PC-3 (cell line): ENCODE measurements at regions of chr5 and their contacts with region 1.

Region 1: GRCh38 chr5:55936100-55936693 is 58.6 kb downstream of the IL6ST start:
- DNase-seq: peak; percentile 72
- ATAC-seq: peak; percentile 77
- H3K4me3 ChIP-seq: no peak overlapping the region
- H3K27ac ChIP-seq: no peak overlapping the region
- H3K4me1 ChIP-seq: no peaks in the 10 kb centered on the region
- H3K27me3 ChIP-seq: no peaks in the 10 kb centered on the region
- CTCF ChIP-seq: peak; percentile 88

Region 2: DNA sequence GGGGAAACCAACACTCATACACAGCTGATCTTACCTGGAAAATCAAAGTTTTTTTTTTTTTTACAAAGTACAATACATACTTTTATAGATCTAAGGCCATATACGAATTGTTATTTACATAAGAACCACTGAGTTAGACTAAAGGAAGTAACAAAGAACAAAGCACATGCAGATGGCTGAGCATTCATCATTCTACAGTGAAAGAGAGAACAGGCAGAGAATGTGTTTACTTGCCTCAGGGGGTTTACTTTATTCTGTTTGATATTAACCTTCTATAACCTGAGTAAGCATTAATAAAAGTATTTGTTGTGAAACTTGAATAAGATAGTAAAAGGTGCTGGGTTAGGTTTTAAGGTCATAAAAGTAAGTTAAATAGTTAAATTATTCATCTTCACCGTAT is 278.8 kb before region 1 on chr5:
- CTCF ChIA-PET with region 1: interaction called, 13 read pairs
- POLR2A ChIA-PET with region 1: no interaction called
- intact Hi-C with region 1: no loop called
- DNase-seq: peak; percentile 51
- ATAC-seq: peak; percentile 95
- H3K4me3 ChIP-seq: no peak overlapping the region
- H3K27ac ChIP-seq: no peak overlapping the region
- H3K4me1 ChIP-seq: peaks cover 8% of the 10 kb centered on the region; the same call in 1 of the 2 replicates
- H3K27me3 ChIP-seq: no peaks in the 10 kb centered on the region
- CTCF ChIP-seq: no peak

Region 3: GRCh38 chr5:56200856-56201666 is 264.9 kb after region 1 on chr5:
- CTCF ChIA-PET with region 1: interaction called, 4 read pairs
- POLR2A ChIA-PET with region 1: no interaction called
- intact Hi-C with region 1: loop called (anchors 1 kb)
- DNase-seq: peak; percentile 71
- ATAC-seq: peak; percentile 99
- H3K4me3 ChIP-seq: no peak overlapping the region
- H3K27ac ChIP-seq: no peak overlapping the region
- H3K4me1 ChIP-seq: peaks cover 5% of the 10 kb centered on the region; the same call in 1 of the 2 replicates
- H3K27me3 ChIP-seq: no peaks in the 10 kb centered on the region
- CTCF ChIP-seq: peak; percentile 85

Region 4: GRCh38 chr5:56264417-56265025 is 328.3 kb after region 1 on chr5:
- CTCF ChIA-PET with region 1: interaction called, 12 read pairs
- POLR2A ChIA-PET with region 1: no interaction called
- intact Hi-C with region 1: no loop called
- DNase-seq: peak; percentile 66
- ATAC-seq: peak; percentile 75
- H3K4me3 ChIP-seq: 0 out of 2 replicates have a peak overlapping the region, but pooled peaks have one; percentile 29
- H3K27ac ChIP-seq: no peak overlapping the region
- H3K4me1 ChIP-seq: peaks cover under 1% of the 10 kb centered on the region; the same call in 1 of the 2 replicates
- H3K27me3 ChIP-seq: no peaks in the 10 kb centered on the region
- CTCF ChIP-seq: peak; percentile 79

Region 5: GRCh38 chr5:56279979-56280378 is 343.8 kb after region 1 on chr5:
- CTCF ChIA-PET with region 1: no interaction called
- POLR2A ChIA-PET with region 1: no interaction called
- intact Hi-C with region 1: no loop called
- DNase-seq: peak; percentile 85
- ATAC-seq: peak; percentile 82
- H3K4me3 ChIP-seq: no peak overlapping the region
- H3K27ac ChIP-seq: no peak overlapping the region
- H3K4me1 ChIP-seq: peaks cover 30% of the 10 kb centered on the region
- H3K27me3 ChIP-seq: no peaks in the 10 kb centered on the region
- CTCF ChIP-seq: no peak

Region 6: GRCh38 chr5:56670118-56670483 is 733.9 kb after region 1 on chr5:
- CTCF ChIA-PET with region 1: interaction called, 16 read pairs
- POLR2A ChIA-PET with region 1: no interaction called
- intact Hi-C with region 1: no loop called
- DNase-seq: peak; percentile 53
- ATAC-seq: no peak; the same call in 1 of the 2 replicates
- H3K4me3 ChIP-seq: peak overlapping the region; percentile 29; the same call in 1 of the 2 replicates
- H3K27ac ChIP-seq: peak overlapping the region; percentile 91
- H3K4me1 ChIP-seq: peaks cover 39% of the 10 kb centered on the region
- H3K27me3 ChIP-seq: no peaks in the 10 kb centered on the region
- CTCF ChIP-seq: no peak

Region 7: GRCh38 chr5:56833325-56833724 is 897.1 kb after region 1 on chr5:
- CTCF ChIA-PET with region 1: interaction called, 12 read pairs
- POLR2A ChIA-PET with region 1: no interaction called
- intact Hi-C with region 1: no loop called
- DNase-seq: no peak
- ATAC-seq: no peak
- H3K4me3 ChIP-seq: no peak overlapping the region
- H3K27ac ChIP-seq: no peak overlapping the region
- H3K4me1 ChIP-seq: peaks cover 13% of the 10 kb centered on the region
- H3K27me3 ChIP-seq: no peaks in the 10 kb centered on the region
- CTCF ChIP-seq: no peak